ENCODE measurements at regions of chr15 and their contacts with region 1.

Region 1: GRCh38 chr15:86650093-86650492 is 570.4 kb downstream of the AGBL1 start:
- DNase-seq: no peak
- ATAC-seq: no peak
- H3K4me3 ChIP-seq: no peak overlapping the region
- H3K27ac ChIP-seq: no peak overlapping the region
- H3K4me1 ChIP-seq: no peaks in the 10 kb centered on the region
- H3K27me3 ChIP-seq: no peaks in the 10 kb centered on the region
- CTCF ChIP-seq: no peak

Region 2: DNA sequence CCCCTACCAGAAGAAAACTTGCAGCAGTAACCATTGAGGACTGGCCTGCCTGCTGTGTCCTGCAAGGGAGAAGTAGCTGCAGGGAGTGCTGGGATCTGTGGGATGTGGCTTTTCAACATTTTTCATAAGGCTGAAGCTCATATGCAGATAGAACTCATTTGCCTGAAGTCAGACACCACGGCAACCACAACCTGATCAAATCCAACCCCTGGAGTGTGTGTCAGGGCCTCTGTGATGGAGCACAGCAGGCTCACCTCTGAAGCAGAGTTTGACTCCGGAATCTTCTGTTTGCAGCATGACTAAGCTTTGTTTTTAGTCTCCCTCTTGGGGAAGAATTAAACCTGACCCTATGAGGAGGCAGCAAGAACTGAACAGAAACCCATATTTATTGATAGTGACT is 61.7 kb before region 1 on chr15:
- intact Hi-C with region 1: loop called in 1 of 10 experiments (anchors 10 kb)
- DNase-seq: no peak
- ATAC-seq: no peak
- H3K4me3 ChIP-seq: no peak overlapping the region
- H3K27ac ChIP-seq: no peak overlapping the region
- H3K4me1 ChIP-seq: peaks cover 0 to 9% (median 0%) of the 10 kb centered on the region in 9 donors
- H3K27me3 ChIP-seq: peaks cover 0 to 4% (median 0%) of the 10 kb centered on the region in 7 donors
- CTCF ChIP-seq: no peak

Region 3: GRCh38 chr15:86711476-86711875 is 61.4 kb after region 1 on chr15:
- intact Hi-C with region 1: loop called in 1 of 10 experiments (anchors 10 kb)
- DNase-seq: no peak
- ATAC-seq: no peak
- H3K4me3 ChIP-seq: no peak overlapping the region
- H3K27ac ChIP-seq: no peak overlapping the region
- H3K4me1 ChIP-seq: no peaks in the 10 kb centered on the region
- H3K27me3 ChIP-seq: no peaks in the 10 kb centered on the region
- CTCF ChIP-seq: no peak

Region 4: GRCh38 chr15:86735244-86736040 is 85.3 kb after region 1 on chr15:
- intact Hi-C with region 1: loop called in 1 of 10 experiments (anchors 10 kb)
- DNase-seq: no peak
- ATAC-seq: no peak
- H3K4me3 ChIP-seq: no peak overlapping the region
- H3K27ac ChIP-seq: no peak overlapping the region
- H3K4me1 ChIP-seq: no peaks in the 10 kb centered on the region
- H3K27me3 ChIP-seq: no peaks in the 10 kb centered on the region
- CTCF ChIP-seq: no peak

Measured in heart right ventricle (tissue), 16 donors.